ENCODE measurements at regions of chr16 and their contacts with region 1.

Region 1: GRCh38 chr16:71484006-71484893 is 4.9 kb downstream of the ZNF19 start:
- DNase-seq: peak; percentile 56 to 96 (median 80)
- ATAC-seq: peak; percentile 85
- H3K4me3 ChIP-seq: peak overlapping the region; percentile 84 to 94
- H3K4me3 Mint-ChIP-seq: peak overlapping the region; percentile 86
- H3K27ac ChIP-seq: peak overlapping the region; percentile 99
- H3K27ac Mint-ChIP-seq: peak overlapping the region; percentile 94
- H3K4me1 ChIP-seq: peaks cover 13% of the 10 kb centered on the region
- H3K4me1 Mint-ChIP-seq: peaks cover 16% of the 10 kb centered on the region
- H3K27me3 ChIP-seq: no peaks in the 10 kb centered on the region
- H3K27me3 Mint-ChIP-seq: peaks cover 3% of the 10 kb centered on the region
- CTCF ChIP-seq: no peak

Region 2: GRCh38 chr16:71288890-71289733 is 195.1 kb before region 1 on chr16 and contains the start of gene CMTR2:
- CTCF ChIA-PET with region 1: no interaction called
- POLR2A ChIA-PET with region 1: no interaction called
- intact Hi-C with region 1: loop called in 1 of 2 experiments (anchors 1 kb)
- DNase-seq: peak; percentile 71 to 95 (median 87)
- ATAC-seq: peak; percentile 91
- H3K4me3 ChIP-seq: peak within 1 kb of the TSS; percentile 72 to 91
- H3K4me3 Mint-ChIP-seq: peak within 1 kb of the TSS; percentile 87
- H3K27ac ChIP-seq: peak within 1 kb of the TSS; percentile 75 to 85
- H3K27ac Mint-ChIP-seq: peak within 1 kb of the TSS; percentile 80
- H3K4me1 ChIP-seq: peaks cover 11% of the 10 kb centered on the region
- H3K4me1 Mint-ChIP-seq: peaks cover 26% of the 10 kb centered on the region
- H3K27me3 ChIP-seq: no peaks in the 10 kb centered on the region
- H3K27me3 Mint-ChIP-seq: peaks cover 14% of the 10 kb centered on the region
- CTCF ChIP-seq: no peak
- total RNA-seq, gene CMTR2: 7.7 to 9.2 TPM

Region 3: DNA sequence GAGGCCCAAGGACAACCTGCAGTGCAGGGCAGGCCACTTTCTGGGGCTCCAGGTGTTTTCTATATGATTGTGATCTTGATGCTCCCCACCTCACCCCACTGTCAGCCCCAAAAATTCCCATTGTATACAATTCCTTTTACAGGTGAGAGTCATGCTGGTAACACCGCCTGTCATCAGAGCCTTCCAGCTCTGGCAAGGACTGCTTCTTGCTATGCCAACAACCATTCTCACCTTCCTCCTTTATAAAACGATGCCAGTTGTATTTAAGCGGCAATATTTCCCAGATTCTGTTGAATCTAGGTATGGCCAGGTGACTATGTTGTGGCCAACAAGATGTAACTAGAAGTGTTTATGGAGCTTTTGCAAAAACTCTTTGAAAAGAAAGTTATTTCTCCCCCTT is 156.1 kb before region 1 on chr16:
- CTCF ChIA-PET with region 1: no interaction called
- POLR2A ChIA-PET with region 1: no interaction called
- intact Hi-C with region 1: no loop called
- DNase-seq: no peak
- ATAC-seq: no peak
- H3K4me3 ChIP-seq: no peak overlapping the region
- H3K4me3 Mint-ChIP-seq: no peak overlapping the region
- H3K27ac ChIP-seq: no peak overlapping the region
- H3K27ac Mint-ChIP-seq: no peak overlapping the region
- H3K4me1 ChIP-seq: no peaks in the 10 kb centered on the region
- H3K4me1 Mint-ChIP-seq: no peaks in the 10 kb centered on the region
- H3K27me3 ChIP-seq: no peaks in the 10 kb centered on the region
- H3K27me3 Mint-ChIP-seq: peaks cover 16% of the 10 kb centered on the region
- CTCF ChIP-seq: no peak

Region 4: GRCh38 chr16:71426072-71426879 is 58.0 kb before region 1 on chr16:
- CTCF ChIA-PET with region 1: no interaction called
- POLR2A ChIA-PET with region 1: no interaction called
- intact Hi-C with region 1: loop called in 1 of 2 experiments (anchors 1 kb)
- DNase-seq: peak in 4 of 9 experiments; percentile 25 to 85 (median 62)
- ATAC-seq: peak; percentile 91
- H3K4me3 ChIP-seq: peak overlapping the region in 1 of 2 experiments; percentile 43
- H3K4me3 Mint-ChIP-seq: peak overlapping the region; percentile 81
- H3K27ac ChIP-seq: peak overlapping the region in 1 of 2 experiments; percentile 22
- H3K27ac Mint-ChIP-seq: peak overlapping the region; percentile 88
- H3K4me1 ChIP-seq: no peaks in the 10 kb centered on the region
- H3K4me1 Mint-ChIP-seq: peaks cover 18% of the 10 kb centered on the region
- H3K27me3 ChIP-seq: peaks cover 0 to 6% of the 10 kb centered on the region in 2 experiments
- H3K27me3 Mint-ChIP-seq: peaks cover 25% of the 10 kb centered on the region
- CTCF ChIP-seq: no peak

Region 5: GRCh38 chr16:71467810-71468209 is 16.4 kb before region 1 on chr16:
- CTCF ChIA-PET with region 1: interaction called, 13 read pairs
- POLR2A ChIA-PET with region 1: interaction called, 10 read pairs
- intact Hi-C with region 1: loop called in 1 of 2 experiments (anchors 1 kb)
- DNase-seq: peak in 8 of 9 experiments; percentile 18 to 68 (median 46)
- ATAC-seq: peak; percentile 92
- H3K4me3 ChIP-seq: no peak overlapping the region
- H3K4me3 Mint-ChIP-seq: no peak overlapping the region
- H3K27ac ChIP-seq: no peak overlapping the region
- H3K27ac Mint-ChIP-seq: no peak overlapping the region
- H3K4me1 ChIP-seq: peaks cover under 1% of the 10 kb centered on the region
- H3K4me1 Mint-ChIP-seq: peaks cover 5% of the 10 kb centered on the region
- H3K27me3 ChIP-seq: no peaks in the 10 kb centered on the region
- H3K27me3 Mint-ChIP-seq: no peaks in the 10 kb centered on the region
- CTCF ChIP-seq: no peak

Region 6: GRCh38 chr16:72008424-72009216 is 524.4 kb after region 1 on chr16 and contains the start of gene DHODH:
- CTCF ChIA-PET with region 1: no interaction called
- POLR2A ChIA-PET with region 1: no interaction called
- intact Hi-C with region 1: loop called in 1 of 2 experiments (anchors 5 kb)
- DNase-seq: peak; percentile 94 to 99 (median 97)
- ATAC-seq: peak; percentile 98
- H3K4me3 ChIP-seq: peak within 1 kb of the TSS; percentile 87 to 90
- H3K4me3 Mint-ChIP-seq: peak within 1 kb of the TSS; percentile 91
- H3K27ac ChIP-seq: peak within 1 kb of the TSS; percentile 41 to 66
- H3K27ac Mint-ChIP-seq: peak within 1 kb of the TSS; percentile 76
- H3K4me1 ChIP-seq: no peaks in the 10 kb centered on the region
- H3K4me1 Mint-ChIP-seq: peaks cover 20% of the 10 kb centered on the region
- H3K27me3 ChIP-seq: no peaks in the 10 kb centered on the region
- H3K27me3 Mint-ChIP-seq: no peaks in the 10 kb centered on the region
- CTCF ChIP-seq: no peak
- total RNA-seq, gene DHODH: 2.4 to 3.0 TPM